ENCODE measurements at regions of chr22 and their contacts with region 1.

Region 1: DNA sequence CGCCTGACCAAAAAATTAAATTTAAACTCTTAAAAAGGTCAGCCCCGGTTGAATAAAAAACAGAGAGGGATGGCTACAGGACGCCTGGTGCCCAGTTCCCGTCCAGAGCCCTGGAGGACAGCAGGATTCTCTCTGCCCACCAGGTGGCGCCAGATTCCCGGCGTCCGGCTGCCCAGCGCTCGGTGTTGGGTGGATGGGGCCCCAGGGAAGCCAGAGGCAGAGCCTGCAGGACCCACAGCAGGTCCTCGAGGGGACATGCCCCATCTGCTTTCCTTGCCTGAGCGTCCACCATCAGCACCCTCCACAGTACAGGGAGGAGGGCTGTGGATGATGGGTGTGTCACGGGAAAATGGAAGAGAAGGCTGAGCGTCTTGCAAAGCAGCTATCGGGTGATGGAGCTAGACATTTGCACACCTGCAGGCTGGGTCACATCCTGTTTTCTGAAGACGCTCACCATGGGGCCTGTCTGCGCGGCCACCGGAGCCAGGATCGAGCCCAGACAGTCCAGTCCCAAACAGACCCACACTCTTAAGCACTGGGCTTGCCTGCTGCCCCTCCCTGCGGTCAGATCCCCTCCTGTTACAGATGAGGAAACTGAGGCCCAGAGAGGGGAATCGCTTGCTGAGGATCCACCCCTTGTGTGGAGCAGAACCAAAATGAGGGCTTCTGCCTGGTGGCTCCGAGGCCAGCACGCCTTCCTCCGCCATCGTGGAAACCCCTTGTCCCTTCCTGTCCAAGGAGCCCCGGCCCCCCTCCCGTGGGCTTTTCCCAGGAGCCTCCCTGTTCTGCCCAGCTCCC is 18.5 kb upstream of the CBX7 start:
- DNase-seq: peak; percentile 93
- H3K4me3 Mint-ChIP-seq: no peak overlapping the region
- H3K27ac Mint-ChIP-seq: peak overlapping the region; percentile 0
- H3K4me1 Mint-ChIP-seq: peaks cover 63% of the 10 kb centered on the region
- H3K27me3 Mint-ChIP-seq: no peaks in the 10 kb centered on the region
- CTCF ChIP-seq: peak; percentile 95

Region 2: DNA sequence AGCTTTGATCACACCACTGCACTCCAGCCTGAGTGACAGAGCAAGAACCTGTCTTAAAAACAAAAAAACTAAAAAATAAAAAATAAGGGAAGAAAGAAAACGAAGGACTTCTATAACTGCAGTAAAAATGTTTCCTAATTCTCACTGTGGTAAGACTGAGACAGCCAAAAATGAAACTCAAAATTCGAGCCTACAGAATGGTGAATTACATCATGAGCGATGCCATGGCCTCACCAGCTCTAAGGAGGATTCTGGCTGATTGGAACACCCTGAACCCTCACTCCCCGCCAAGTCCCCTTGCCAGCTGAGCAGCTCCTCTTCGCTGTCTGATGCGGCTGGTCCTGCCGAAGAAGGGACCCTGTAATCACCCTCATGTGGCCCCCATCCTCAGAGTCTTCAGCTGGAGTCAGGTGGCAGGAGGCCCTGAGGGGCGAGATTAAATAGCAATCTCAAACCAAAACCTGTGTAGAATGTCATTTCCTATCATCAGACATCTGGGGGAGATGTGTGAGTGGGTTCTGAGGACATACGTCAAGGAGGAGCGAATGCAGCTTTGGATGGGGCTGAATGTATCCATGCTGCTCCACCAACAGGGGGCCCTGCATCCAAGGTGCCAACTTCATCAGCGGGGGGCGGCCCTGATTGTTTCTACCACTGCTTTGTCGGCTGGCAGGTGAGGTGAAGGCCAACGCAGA is 44.5 kb after region 1 on chr22:
- CTCF ChIA-PET with region 1: interaction called, 8 read pairs
- intact Hi-C with region 1: loop called (anchors 5 kb)
- DNase-seq: no peak
- H3K4me3 Mint-ChIP-seq: no peak overlapping the region
- H3K27ac Mint-ChIP-seq: peak overlapping the region; percentile 83
- H3K4me1 Mint-ChIP-seq: peaks cover 36% of the 10 kb centered on the region
- H3K27me3 Mint-ChIP-seq: no peaks in the 10 kb centered on the region
- CTCF ChIP-seq: peak; percentile 42

Region 3: DNA sequence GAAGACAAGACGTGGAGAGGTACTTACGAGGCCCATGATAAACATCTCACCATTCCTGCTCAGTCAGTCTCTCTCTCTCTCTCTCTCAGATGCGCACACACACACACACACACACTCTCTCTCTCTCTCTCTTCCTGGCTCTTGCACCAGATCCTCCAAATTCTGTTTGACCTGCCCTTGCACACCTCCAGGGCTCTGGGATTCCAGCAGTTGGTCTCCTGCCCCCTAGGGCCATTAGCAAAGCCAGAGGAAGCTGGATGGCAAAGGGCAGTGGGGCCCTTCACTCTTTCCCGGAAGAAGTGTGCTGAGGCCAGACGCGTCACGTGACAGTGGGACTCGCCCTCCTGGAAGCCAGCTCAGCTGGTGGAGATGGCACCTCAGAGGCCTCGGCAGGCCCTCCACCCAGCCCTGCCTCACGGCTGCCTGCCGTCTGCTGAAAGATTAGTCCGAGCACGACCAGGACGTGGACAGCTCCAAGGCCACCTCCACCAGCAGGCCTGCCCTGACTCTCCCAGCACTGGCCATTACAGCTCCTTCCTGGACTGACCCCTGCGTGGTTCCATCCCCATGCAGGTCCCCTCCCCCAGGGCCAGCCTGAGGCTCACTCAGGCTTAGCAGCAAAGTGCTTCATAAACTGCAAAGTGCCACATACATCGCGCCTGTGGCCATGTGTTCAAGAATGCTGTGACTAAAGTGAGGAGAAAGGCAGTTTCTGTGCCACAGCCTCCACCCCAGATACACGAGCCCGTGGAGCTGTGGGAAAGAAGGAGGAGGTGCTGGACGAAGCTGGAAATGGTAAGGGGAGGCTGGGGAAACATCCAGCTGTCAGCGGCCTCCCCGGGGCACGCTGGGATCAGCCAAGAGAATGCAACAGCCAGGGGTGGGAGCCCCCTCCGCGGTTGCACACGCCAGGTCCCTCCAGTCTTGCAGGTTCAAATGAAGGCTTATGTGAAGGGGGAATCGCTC is 70.1 kb after region 1 on chr22:
- CTCF ChIA-PET with region 1: interaction called, 5 read pairs
- intact Hi-C with region 1: loop called (anchors 10 kb)
- DNase-seq: peak; percentile 60
- H3K4me3 Mint-ChIP-seq: peak overlapping the region; percentile 96
- H3K27ac Mint-ChIP-seq: peak overlapping the region; percentile 89
- H3K4me1 Mint-ChIP-seq: peaks cover 66% of the 10 kb centered on the region
- H3K27me3 Mint-ChIP-seq: no peaks in the 10 kb centered on the region
- CTCF ChIP-seq: no peak

Region 4: DNA sequence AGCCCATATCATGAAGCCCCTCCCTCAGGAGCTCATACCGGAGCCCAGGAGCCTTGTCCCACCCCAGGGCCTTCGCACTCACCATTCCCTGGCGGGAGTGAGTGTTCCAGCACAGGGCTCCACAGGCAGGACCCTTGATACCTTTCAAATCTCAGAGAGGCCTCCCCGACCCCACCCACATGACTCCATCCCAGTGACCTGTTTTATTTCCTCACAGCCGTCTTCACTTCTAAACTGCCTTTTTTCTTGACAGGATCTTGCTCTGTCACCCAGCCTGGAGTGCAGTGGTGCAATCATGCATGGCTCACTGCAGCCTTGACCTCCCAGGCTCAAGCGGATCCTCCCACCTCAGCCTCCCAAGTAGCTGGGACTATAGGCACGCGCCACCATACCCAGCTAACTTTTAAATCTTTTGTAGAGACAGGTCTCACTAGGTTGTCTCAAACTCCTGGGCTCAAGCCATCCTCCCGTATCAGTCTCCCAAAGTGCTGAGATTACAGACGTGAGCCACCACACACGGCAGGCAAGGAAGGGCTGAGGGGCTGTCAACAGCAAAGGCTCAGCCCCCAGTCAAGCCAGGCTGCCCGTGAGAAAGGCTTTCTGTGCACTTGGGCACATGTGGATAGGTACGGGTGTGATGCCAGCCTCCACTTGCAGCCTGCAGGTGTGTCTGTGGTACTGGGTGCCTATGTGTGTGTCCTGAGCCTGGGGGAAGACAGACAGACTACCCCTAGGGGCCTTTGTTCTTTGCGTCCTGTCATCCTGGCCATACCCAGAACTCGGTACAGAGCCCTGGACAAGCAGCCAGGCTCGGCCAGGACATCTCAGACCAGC is 139.1 kb after region 1 on chr22:
- CTCF ChIA-PET with region 1: interaction called, 29 read pairs
- intact Hi-C with region 1: loop called (anchors 2 kb)
- DNase-seq: no peak
- H3K4me3 Mint-ChIP-seq: peak overlapping the region; percentile 40
- H3K27ac Mint-ChIP-seq: peak overlapping the region; percentile 86
- H3K4me1 Mint-ChIP-seq: peaks cover 61% of the 10 kb centered on the region
- H3K27me3 Mint-ChIP-seq: no peaks in the 10 kb centered on the region
- CTCF ChIP-seq: no peak

Region 5: GRCh38 chr22:39405346-39406085 is 234.5 kb after region 1 on chr22:
- CTCF ChIA-PET with region 1: no interaction called
- intact Hi-C with region 1: no loop called
- DNase-seq: no peak
- H3K4me3 Mint-ChIP-seq: no peak overlapping the region
- H3K27ac Mint-ChIP-seq: no peak overlapping the region
- H3K4me1 Mint-ChIP-seq: no peaks in the 10 kb centered on the region
- H3K27me3 Mint-ChIP-seq: no peaks in the 10 kb centered on the region
- CTCF ChIP-seq: no peak